Adrenal gland (tissue), 19 donors: ENCODE measurements at regions of chr6 and their contacts with region 1.

Region 1: DNA sequence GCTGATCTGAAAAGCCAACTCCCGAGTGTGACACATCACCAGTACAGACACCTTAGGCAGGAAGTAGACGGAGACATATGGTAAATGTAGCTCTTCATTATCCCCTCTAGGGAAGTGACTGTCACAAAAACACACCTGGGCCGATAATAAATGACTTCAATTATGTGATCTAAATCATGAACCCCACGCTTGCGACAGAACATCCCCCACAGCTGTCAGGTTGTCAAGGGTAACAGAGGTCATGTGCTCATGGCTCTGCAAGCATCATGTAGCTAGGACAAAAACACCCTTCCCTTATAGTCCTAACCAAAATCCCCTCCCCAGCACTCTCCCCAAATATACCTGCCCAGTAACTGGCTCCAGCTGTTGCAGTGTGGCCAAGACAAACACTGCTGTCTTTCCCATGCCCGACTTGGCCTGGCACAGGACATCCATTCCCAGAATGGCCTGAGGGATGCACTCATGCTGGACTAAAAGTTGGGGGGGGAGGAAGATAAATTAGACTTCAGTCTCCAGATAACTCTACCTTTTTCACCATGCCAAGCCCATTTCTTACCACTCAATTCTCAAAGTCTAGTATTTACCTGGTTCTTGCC is 2.9 kb downstream of the DDX39B start:
- DNase-seq: peak in 1 of 7 donors; percentile 48
- H3K4me3 ChIP-seq: no peak overlapping the region
- H3K27ac ChIP-seq: peak overlapping the region in 1 of 5 donors; percentile 1
- H3K4me1 ChIP-seq: peaks cover 20 to 45% of the 10 kb centered on the region in 2 donors
- H3K27me3 ChIP-seq: no peaks in the 10 kb centered on the region
- CTCF ChIP-seq: no peak
- POLR2A ChIP-seq: no peak

Region 2: GRCh38 chr6:31332637-31333602 is 206.0 kb before region 1 on chr6:
- intact Hi-C with region 1: no loop called
- DNase-seq: no peak
- H3K4me3 ChIP-seq: no peak overlapping the region
- H3K27ac ChIP-seq: no peak overlapping the region
- H3K4me1 ChIP-seq: no peaks in the 10 kb centered on the region
- H3K27me3 ChIP-seq: no peaks in the 10 kb centered on the region
- CTCF ChIP-seq: no peak
- POLR2A ChIP-seq: no peak

Region 3: GRCh38 chr6:31493875-31494694 is 44.8 kb before region 1 on chr6:
- intact Hi-C with region 1: loop called (anchors 5 kb)
- DNase-seq: peak; percentile 56 to 90 (median 82)
- H3K4me3 ChIP-seq: peak overlapping the region in 2 of 4 donors; percentile 34 to 69
- H3K27ac ChIP-seq: peak overlapping the region in 3 of 5 donors; percentile 5 to 89 (median 51)
- H3K4me1 ChIP-seq: peaks cover 0 to 9% of the 10 kb centered on the region in 2 donors
- H3K27me3 ChIP-seq: peaks cover 4% of the 10 kb centered on the region
- CTCF ChIP-seq: peak; percentile 45 to 85 (median 75)
- POLR2A ChIP-seq: no peak